ENCODE measurements at regions of chr1 and their contacts with region 1.

Region 1: DNA sequence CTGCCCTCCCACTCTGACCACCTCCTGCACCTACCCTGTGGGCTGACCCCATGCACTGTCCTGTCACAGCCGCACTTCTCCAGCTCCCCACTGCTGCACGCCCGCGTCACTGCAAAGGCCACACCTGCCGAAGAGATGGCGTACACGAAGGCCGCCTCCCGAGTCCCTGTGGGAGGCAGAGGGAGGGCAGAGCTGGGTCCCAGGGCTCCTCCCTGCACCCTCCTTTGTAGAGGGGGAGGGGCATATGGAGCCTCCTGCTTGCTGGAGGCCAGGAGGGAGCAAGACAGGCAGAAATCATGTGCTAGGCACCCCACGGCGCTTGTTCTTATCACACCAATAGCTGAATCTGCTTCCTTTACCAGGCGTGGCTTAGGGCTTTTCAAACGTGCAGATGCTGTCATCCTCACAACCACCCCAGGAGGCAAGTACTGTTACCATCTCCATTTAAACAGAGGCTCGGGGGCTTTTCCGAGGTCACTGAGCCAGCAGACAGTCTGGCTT is 21.4 kb downstream of the WNT4 start:
- DNase-seq: no peak
- H3K4me3 ChIP-seq: no peak overlapping the region
- H3K27ac ChIP-seq: no peak overlapping the region
- H3K4me1 ChIP-seq: peaks cover 0 to 20% (median 16%) of the 10 kb centered on the region in 4 experiments; a peak in 6 of 7 replicates
- H3K27me3 ChIP-seq: no peaks in the 10 kb centered on the region
- CTCF ChIP-seq: no peak
- EP300 ChIP-seq: no peak
- POLR2A ChIP-seq: no peak
- RAD21 ChIP-seq: no peak

Region 2: GRCh38 chr1:21896652-21897532 is 224.6 kb before region 1 on chr1:
- CTCF ChIA-PET with region 1: no interaction called
- POLR2A ChIA-PET with region 1: no interaction called
- DNase-seq: no peak
- H3K4me3 ChIP-seq: no peak overlapping the region
- H3K27ac ChIP-seq: no peak overlapping the region
- H3K4me1 ChIP-seq: peaks cover 0 to 11% (median 4%) of the 10 kb centered on the region in 4 experiments; a peak in 2 of 7 replicates
- H3K27me3 ChIP-seq: no peaks in the 10 kb centered on the region
- CTCF ChIP-seq: no peak
- EP300 ChIP-seq: no peak
- POLR2A ChIP-seq: no peak
- RAD21 ChIP-seq: no peak

Region 3: GRCh38 chr1:22105611-22106207 is 15.8 kb before region 1 on chr1:
- CTCF ChIA-PET with region 1: interaction called, 27 read pairs
- POLR2A ChIA-PET with region 1: interaction called, 3 read pairs
- DNase-seq: no peak
- H3K4me3 ChIP-seq: no peak overlapping the region
- H3K27ac ChIP-seq: no peak overlapping the region
- H3K4me1 ChIP-seq: no peaks in the 10 kb centered on the region; a peak in 1 of 7 replicates
- H3K27me3 ChIP-seq: no peaks in the 10 kb centered on the region
- CTCF ChIP-seq: peak in 2 of 3 experiments; percentile 74 to 85; a peak in 3 of 4 replicates
- EP300 ChIP-seq: no peak
- POLR2A ChIP-seq: no peak
- RAD21 ChIP-seq: peak; percentile 84 to 89

Measured in H1 (cell line).